Endothelial cell of umbilical vein (primary cell): ENCODE measurements at regions of chr20 and their contacts with region 1.

Region 1: GRCh38 chr20:33653218-33653899 is 8.8 kb upstream of the C20orf144 start:
- DNase-seq: peak; percentile 67
- H3K4me3 ChIP-seq: no peak overlapping the region
- H3K27ac ChIP-seq: no peak overlapping the region
- H3K4me1 ChIP-seq: no peaks in the 10 kb centered on the region
- H3K27me3 ChIP-seq: no peaks in the 10 kb centered on the region
- CTCF ChIP-seq: peak; percentile 79 to 94
- POLR2A ChIP-seq: peak; percentile 41

Region 2: DNA sequence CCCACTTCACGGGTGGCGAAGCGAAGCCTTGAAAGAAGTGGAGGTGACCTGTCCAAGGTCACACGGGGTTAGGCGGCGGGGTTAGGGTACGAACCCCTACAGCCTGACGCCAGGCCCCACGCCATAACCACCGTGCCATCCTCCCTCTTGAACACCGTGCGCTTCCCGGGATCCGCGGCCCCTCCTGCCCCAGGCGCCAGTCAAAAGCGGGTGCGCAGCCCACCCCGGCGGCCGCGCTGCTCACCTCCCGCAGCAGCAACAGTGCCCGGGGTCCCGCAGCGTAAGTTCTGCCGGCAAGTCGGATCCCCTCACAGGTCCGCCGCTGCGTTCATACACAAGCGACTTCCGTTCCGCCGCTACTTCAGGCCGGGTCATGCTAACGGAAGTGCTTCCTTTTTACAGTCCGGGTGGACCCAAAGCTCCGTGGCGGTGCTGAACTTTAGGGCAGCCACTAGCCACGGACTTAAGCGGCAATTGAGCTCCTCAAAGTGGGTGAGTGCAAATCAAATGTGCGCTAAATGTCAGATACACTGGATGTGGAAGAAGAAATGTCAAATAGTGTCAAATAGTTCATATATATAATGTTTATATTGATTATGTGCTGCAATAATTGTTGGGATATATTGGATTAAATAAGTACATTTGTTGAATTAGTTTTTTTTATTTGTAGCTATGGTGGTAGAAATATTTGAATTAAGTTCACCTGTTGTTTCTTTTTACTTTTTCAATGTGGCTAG is 252.0 kb before region 1 on chr20 and contains the start of gene CDK5RAP1:
- CTCF ChIA-PET with region 1: no interaction called
- POLR2A ChIA-PET with region 1: no interaction called
- dilution Hi-C with region 1: no loop called
- intact Hi-C with region 1: loop called (anchors 1 kb)
- DNase-seq: peak; percentile 90
- H3K4me3 ChIP-seq: peak within 1 kb of the TSS; percentile 44 to 81 (median 76)
- H3K27ac ChIP-seq: peak within 1 kb of the TSS; percentile 2
- H3K4me1 ChIP-seq: peaks cover 10% of the 10 kb centered on the region
- H3K27me3 ChIP-seq: no peaks in the 10 kb centered on the region
- CTCF ChIP-seq: no peak
- POLR2A ChIP-seq: peak; percentile 78
- total RNA-seq, gene CDK5RAP1: 31.1 and 36.5 TPM in 2 replicates

Region 3: GRCh38 chr20:33443512-33444239 is 209.7 kb before region 1 on chr20 and contains the start of gene SNTA1:
- CTCF ChIA-PET with region 1: interaction called, 14 read pairs
- POLR2A ChIA-PET with region 1: no interaction called
- dilution Hi-C with region 1: no loop called
- intact Hi-C with region 1: no loop called
- DNase-seq: peak; percentile 69
- H3K4me3 ChIP-seq: peak within 1 kb of the TSS; percentile 2 to 46 (median 37)
- H3K27ac ChIP-seq: no peak within 1 kb of the TSS
- H3K4me1 ChIP-seq: peaks cover 5% of the 10 kb centered on the region
- H3K27me3 ChIP-seq: no peaks in the 10 kb centered on the region
- CTCF ChIP-seq: no peak
- POLR2A ChIP-seq: no peak
- total RNA-seq, gene SNTA1: 5.2 and 6.1 TPM in 2 replicates

Region 4: DNA sequence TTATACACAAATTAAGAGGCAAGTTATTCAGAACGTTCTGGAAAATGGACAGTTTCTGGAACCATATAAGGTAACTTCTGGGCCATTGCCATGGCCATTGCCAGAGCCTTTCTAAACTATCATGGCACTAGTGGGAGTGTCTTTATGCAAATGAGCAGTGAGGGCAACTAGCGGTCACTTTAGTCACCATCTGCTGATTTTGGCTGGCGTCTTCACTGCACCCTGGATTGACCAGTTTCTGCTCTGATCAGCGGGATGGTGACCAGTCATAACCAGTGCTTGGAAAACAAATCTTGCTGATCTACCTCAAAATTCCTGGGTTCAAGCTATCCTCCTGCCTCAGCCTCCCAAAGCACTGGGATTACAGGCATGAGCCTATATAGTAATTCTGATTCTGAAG is 202.5 kb before region 1 on chr20:
- CTCF ChIA-PET with region 1: interaction called, 28 read pairs
- POLR2A ChIA-PET with region 1: no interaction called
- dilution Hi-C with region 1: no loop called
- intact Hi-C with region 1: no loop called
- DNase-seq: no peak
- H3K4me3 ChIP-seq: no peak overlapping the region
- H3K27ac ChIP-seq: no peak overlapping the region
- H3K4me1 ChIP-seq: no peaks in the 10 kb centered on the region
- H3K27me3 ChIP-seq: peaks cover 0 to 2% of the 10 kb centered on the region in 2 experiments
- CTCF ChIP-seq: no peak
- POLR2A ChIP-seq: no peak

Region 5: DNA sequence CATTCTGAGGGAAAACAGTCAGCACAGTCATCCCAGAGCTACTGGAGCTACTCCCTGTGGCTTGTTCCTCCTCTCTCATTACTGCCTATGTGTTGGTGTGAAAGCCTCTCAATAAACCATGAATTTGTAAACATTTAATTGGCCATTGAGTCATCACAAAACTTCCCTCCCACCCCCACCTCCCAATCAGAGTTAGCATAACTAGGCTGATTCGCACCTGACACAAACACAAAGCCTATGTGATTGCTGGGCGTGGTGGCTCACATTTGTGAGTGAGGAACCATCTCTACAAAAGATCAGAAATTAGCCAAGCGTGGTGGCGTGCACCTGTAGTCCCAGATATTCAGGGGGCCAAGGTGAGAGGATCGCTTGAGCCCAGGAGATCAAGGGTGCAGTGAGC is 192.6 kb before region 1 on chr20:
- CTCF ChIA-PET with region 1: interaction called, 58 read pairs
- POLR2A ChIA-PET with region 1: no interaction called
- dilution Hi-C with region 1: no loop called
- intact Hi-C with region 1: loop called (anchors 1 kb)
- DNase-seq: no peak
- H3K4me3 ChIP-seq: no peak overlapping the region
- H3K27ac ChIP-seq: no peak overlapping the region
- H3K4me1 ChIP-seq: no peaks in the 10 kb centered on the region
- H3K27me3 ChIP-seq: no peaks in the 10 kb centered on the region
- CTCF ChIP-seq: no peak
- POLR2A ChIP-seq: no peak

Region 6: GRCh38 chr20:33515569-33516216 is 137.7 kb before region 1 on chr20:
- CTCF ChIA-PET with region 1: interaction called, 7 read pairs
- POLR2A ChIA-PET with region 1: no interaction called
- dilution Hi-C with region 1: no loop called
- intact Hi-C with region 1: loop called (anchors 5 kb)
- DNase-seq: no peak
- H3K4me3 ChIP-seq: no peak overlapping the region
- H3K27ac ChIP-seq: no peak overlapping the region
- H3K4me1 ChIP-seq: peaks cover 19% of the 10 kb centered on the region
- H3K27me3 ChIP-seq: no peaks in the 10 kb centered on the region
- CTCF ChIP-seq: peak in 1 of 2 donors; percentile 11
- POLR2A ChIP-seq: no peak

Region 7: DNA sequence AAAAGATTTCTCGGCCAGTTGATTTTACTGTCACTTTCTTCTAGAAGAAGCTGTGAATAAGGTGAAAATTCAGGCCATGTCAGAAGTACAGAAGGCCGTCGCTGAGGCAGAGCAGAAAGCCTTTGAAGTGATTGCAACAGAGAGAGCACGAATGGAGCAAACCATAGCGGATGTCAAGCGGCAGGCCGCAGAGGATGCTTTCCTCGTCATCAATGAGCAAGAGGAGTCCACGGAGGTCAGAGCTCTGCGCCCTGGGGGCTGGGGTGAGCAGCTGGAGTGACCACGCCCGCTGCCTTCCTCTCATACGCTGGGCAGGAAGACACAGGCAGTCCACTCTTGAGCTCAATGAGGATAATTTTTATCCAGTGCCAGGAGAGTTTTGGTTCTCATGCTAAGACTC is 13.1 kb before region 1 on chr20:
- CTCF ChIA-PET with region 1: interaction called, 16 read pairs
- POLR2A ChIA-PET with region 1: no interaction called
- dilution Hi-C with region 1: no loop called
- intact Hi-C with region 1: no loop called
- DNase-seq: no peak
- H3K4me3 ChIP-seq: no peak overlapping the region
- H3K27ac ChIP-seq: no peak overlapping the region
- H3K4me1 ChIP-seq: no peaks in the 10 kb centered on the region
- H3K27me3 ChIP-seq: no peaks in the 10 kb centered on the region
- CTCF ChIP-seq: no peak
- POLR2A ChIP-seq: no peak